CD14-positive monocyte (primary cell): ENCODE measurements at regions of chr21 and their contacts with region 1.

Region 1: DNA sequence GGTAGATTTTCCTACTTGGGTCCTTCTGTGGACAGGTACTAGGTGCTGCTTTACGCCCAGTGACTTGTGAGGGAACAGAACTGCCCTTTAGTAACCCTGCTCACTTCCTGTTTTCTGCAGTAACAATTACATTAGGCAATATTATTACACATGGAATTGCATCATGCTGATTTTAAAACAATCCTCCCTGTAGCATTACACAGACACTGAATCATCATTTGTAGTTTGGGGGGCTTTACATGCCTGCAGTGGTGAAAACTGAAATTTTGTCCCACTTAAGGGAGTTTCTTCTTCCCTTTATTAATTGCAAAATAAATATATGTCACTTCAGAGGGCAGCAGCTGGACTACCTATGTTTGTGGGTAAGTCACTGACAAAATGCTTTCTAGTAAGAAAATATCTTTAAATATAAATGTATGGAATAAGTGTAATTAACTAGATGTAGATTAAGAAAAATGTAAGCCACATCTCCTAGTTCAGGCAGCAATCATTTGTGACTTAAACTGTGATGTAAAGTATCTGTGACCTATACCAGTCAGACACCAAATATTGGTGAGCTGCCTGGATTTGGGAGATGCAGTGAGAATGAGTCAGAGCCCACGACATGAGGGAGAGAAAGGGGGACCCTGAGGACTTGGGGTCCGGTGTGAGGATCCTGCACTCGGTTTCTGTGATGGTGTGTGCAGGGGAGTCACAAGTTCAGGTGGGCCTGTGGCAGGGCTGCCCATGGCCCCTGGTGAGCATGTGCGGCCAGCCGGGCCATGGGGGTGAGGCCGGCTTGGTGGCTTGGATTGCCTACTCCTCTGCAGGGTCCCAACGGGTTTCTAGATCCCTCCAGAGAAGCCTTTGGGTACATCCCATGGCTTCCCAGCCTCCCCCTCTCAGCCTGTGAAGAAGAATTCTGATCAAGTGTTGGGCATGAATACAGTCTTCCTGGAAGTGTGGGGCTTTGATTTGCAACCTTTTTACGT is 19.2 kb upstream of the ABCG1 start:
- DNase-seq: peak; percentile 89 to 98 (median 96)
- H3K4me3 ChIP-seq: peak overlapping the region in 1 of 3 experiments; percentile 54
- H3K4me3 Mint-ChIP-seq: peak overlapping the region in 1 of 2 donors; percentile 73
- H3K27ac ChIP-seq: peak overlapping the region in 1 of 2 donors; percentile 90
- H3K27ac Mint-ChIP-seq: peak overlapping the region; percentile 81 to 96 (median 94)
- H3K4me1 ChIP-seq: peaks cover 37 to 46% of the 10 kb centered on the region in 2 donors
- H3K4me1 Mint-ChIP-seq: peaks cover 55% of the 10 kb centered on the region
- H3K27me3 ChIP-seq: no peaks in the 10 kb centered on the region
- H3K27me3 Mint-ChIP-seq: peaks cover 0 to 1% (median 0%) of the 10 kb centered on the region in 3 donors
- CTCF ChIP-seq: no peak

Region 2: GRCh38 chr21:42227909-42228708 is 28.3 kb after region 1 on chr21:
- intact Hi-C with region 1: loop called (anchors 2 kb)
- DNase-seq: peak; percentile 99 to 100 (median 100)
- H3K4me3 ChIP-seq: peak overlapping the region in 1 of 3 experiments; percentile 33
- H3K4me3 Mint-ChIP-seq: peak overlapping the region; percentile 56 to 70
- H3K27ac ChIP-seq: peak overlapping the region; percentile 59 to 86
- H3K27ac Mint-ChIP-seq: peak overlapping the region; percentile 93 to 98 (median 95)
- H3K4me1 ChIP-seq: peaks cover 42 to 45% of the 10 kb centered on the region in 2 donors
- H3K4me1 Mint-ChIP-seq: peaks cover 54% of the 10 kb centered on the region
- H3K27me3 ChIP-seq: no peaks in the 10 kb centered on the region
- H3K27me3 Mint-ChIP-seq: no peaks in the 10 kb centered on the region
- CTCF ChIP-seq: no peak

Region 3: DNA sequence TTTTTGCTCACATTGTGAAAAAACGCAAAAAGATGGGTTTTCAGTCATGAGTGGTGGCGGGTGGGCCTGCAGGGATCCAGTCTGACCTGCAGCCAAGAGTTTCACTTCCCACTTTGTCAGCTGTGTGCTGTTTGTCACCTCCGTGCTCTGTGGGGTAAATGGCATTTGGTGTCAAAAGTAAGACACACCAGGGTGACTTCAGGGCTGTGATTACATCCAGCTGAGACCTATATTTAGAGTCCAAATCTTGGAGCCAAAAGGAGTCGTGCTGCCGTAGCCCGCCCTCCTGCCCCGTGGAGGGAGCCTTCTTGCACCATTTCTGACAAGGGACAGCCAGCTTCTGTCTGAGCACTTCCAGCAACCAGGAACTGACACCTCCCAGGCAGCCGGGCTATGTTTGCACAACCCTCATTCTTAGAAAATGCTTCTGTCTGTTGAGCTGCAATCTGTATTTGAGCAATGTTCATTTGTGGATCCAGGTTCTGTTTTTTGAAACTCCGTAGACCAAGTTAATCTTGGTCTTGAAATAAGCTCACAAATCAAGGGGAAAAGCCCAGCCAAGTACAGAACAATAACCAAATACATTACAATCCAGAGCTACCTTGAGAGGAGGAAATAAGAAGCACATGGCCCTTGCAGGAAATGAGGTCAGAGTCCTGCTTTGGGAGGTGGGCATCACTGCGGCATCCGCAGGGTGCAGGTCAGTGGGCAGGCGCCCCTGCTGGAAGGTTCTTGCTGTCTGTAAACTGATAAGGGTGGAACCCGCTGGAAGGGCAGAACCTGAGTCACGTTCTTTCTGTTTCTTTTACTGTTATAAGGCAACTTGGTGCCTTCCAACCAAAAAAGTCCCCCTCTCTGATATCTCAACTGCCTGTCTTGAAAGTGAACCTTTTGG is 33.5 kb after region 1 on chr21:
- intact Hi-C with region 1: loop called (anchors 2 kb)
- DNase-seq: peak; percentile 91 to 92 (median 92)
- H3K4me3 ChIP-seq: peak overlapping the region in 1 of 3 experiments; percentile 74
- H3K4me3 Mint-ChIP-seq: peak overlapping the region; percentile 64 to 81
- H3K27ac ChIP-seq: peak overlapping the region; percentile 92 to 94
- H3K27ac Mint-ChIP-seq: peak overlapping the region; percentile 95 to 98 (median 97)
- H3K4me1 ChIP-seq: peaks cover 69 to 82% of the 10 kb centered on the region in 2 donors
- H3K4me1 Mint-ChIP-seq: peaks cover 86% of the 10 kb centered on the region
- H3K27me3 ChIP-seq: no peaks in the 10 kb centered on the region
- H3K27me3 Mint-ChIP-seq: peaks cover 1 to 10% (median 6%) of the 10 kb centered on the region in 3 donors
- CTCF ChIP-seq: peak; percentile 58